MCF 10A (cell line): ENCODE measurements at regions of chr5 and their contacts with region 1.

Region 1: GRCh38 chr5:45454090-45454489 is 242.1 kb downstream of the HCN1 start:
- DNase-seq: peak; percentile 72
- H3K4me3 Mint-ChIP-seq: no peak overlapping the region
- H3K27ac Mint-ChIP-seq: no peak overlapping the region
- H3K4me1 Mint-ChIP-seq: no peaks in the 10 kb centered on the region
- H3K27me3 Mint-ChIP-seq: no peaks in the 10 kb centered on the region
- CTCF ChIP-seq: no peak

Region 2: GRCh38 chr5:45578270-45578669 is 124.2 kb after region 1 on chr5:
- CTCF ChIA-PET with region 1: no interaction called
- POLR2A ChIA-PET with region 1: no interaction called
- intact Hi-C with region 1: loop called (anchors 5 kb)
- DNase-seq: peak; percentile 84
- H3K4me3 Mint-ChIP-seq: no peak overlapping the region
- H3K27ac Mint-ChIP-seq: peak overlapping the region; percentile 96
- H3K4me1 Mint-ChIP-seq: peaks cover 16% of the 10 kb centered on the region
- H3K27me3 Mint-ChIP-seq: no peaks in the 10 kb centered on the region
- CTCF ChIP-seq: no peak